AG04449 (cell line): ENCODE measurements at regions of chr5 and their contacts with region 1.

Region 1: GRCh38 chr5:141691867-141692532 is 10.0 kb upstream of the ARAP3 start:
- DNase-seq: no peak
- H3K4me3 ChIP-seq: peak overlapping the region; percentile 61
- CTCF ChIP-seq: peak; percentile 99

Region 2: DNA sequence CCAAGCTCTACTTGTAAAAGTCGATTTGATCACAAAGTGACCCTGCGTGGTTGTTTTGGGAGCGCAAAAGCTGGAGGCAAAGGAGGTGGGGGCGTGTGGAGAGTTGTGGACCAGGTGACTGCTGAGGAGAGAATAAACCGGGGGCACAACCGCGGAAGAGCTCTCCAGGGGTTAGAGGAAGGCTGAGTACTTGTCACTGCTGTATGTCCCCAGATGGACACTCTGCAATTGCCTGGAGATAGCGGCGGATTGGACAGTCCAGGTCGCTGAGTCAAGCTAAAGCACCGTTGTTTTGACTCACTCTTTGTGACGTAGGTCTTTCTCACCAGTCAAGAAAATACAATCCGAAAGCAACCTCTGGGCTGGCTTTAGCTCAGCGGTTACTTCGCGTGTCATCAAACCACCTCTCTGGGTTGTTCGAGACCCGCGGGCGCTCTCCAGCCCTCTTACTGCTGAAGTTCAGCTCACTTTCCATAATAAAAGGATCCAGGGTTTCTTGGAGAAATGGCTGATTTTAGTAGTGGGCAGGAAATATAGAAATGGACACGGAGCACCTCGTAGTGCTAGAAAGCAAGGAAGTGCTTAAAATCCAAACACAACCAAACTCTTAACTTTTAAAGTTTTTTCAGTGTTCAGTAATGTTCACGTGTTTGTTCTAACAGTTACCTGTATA is 966.1 kb before region 1 on chr5:
- CTCF ChIA-PET with region 1: no interaction called
- POLR2A ChIA-PET with region 1: no interaction called
- DNase-seq: peak; percentile 76
- H3K4me3 ChIP-seq: peak overlapping the region; percentile 63
- CTCF ChIP-seq: no peak

Region 3: GRCh38 chr5:141681695-141682641 is 10.0 kb before region 1 on chr5 and contains the start of gene ARAP3:
- CTCF ChIA-PET with region 1: interaction called, 74 read pairs
- POLR2A ChIA-PET with region 1: no interaction called
- DNase-seq: peak; percentile 37
- H3K4me3 ChIP-seq: peak within 1 kb of the TSS; percentile 58
- CTCF ChIP-seq: no peak

Region 4: DNA sequence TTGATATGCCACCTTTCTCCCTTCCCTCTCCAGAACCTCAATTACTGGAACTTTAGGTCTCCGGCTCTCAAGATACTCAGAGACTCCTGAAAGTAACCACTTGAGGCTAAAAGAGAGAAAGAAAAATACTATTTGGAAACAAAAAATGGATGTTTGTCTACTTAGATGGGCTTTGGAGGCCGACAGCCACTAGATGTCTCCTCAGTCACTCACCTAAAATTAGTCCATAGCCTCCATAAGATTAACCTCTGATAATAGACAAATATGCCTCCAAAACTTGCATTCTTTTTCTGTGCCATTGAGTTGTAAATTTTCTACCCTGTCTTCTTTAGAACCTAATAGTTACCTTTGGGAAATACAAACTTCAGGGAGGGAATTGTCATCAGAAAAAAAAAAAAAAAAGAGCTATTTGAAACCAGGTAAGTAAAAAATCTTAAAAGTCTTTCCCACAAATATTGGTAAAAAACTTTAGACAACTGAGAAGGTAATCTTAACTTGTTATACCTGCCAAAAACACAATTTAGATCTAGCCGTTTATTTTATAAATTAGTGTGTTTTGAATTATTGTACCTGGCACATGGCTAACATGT is 197.4 kb after region 1 on chr5:
- CTCF ChIA-PET with region 1: interaction called, 567 read pairs
- POLR2A ChIA-PET with region 1: no interaction called
- DNase-seq: no peak
- H3K4me3 ChIP-seq: no peak overlapping the region
- CTCF ChIP-seq: peak; percentile 26

Region 5: GRCh38 chr5:141923448-141924352 is 231.7 kb after region 1 on chr5 and contains the start of gene DELE1:
- CTCF ChIA-PET with region 1: interaction called, 20 read pairs
- POLR2A ChIA-PET with region 1: no interaction called
- DNase-seq: peak; percentile 70
- H3K4me3 ChIP-seq: peak within 1 kb of the TSS; percentile 85
- CTCF ChIP-seq: no peak

Region 6: GRCh38 chr5:141951332-141951781 is 259.4 kb after region 1 on chr5:
- CTCF ChIA-PET with region 1: interaction called, 828 read pairs
- POLR2A ChIA-PET with region 1: no interaction called
- DNase-seq: no peak
- H3K4me3 ChIP-seq: no peak overlapping the region
- CTCF ChIP-seq: peak; percentile 58

Region 7: DNA sequence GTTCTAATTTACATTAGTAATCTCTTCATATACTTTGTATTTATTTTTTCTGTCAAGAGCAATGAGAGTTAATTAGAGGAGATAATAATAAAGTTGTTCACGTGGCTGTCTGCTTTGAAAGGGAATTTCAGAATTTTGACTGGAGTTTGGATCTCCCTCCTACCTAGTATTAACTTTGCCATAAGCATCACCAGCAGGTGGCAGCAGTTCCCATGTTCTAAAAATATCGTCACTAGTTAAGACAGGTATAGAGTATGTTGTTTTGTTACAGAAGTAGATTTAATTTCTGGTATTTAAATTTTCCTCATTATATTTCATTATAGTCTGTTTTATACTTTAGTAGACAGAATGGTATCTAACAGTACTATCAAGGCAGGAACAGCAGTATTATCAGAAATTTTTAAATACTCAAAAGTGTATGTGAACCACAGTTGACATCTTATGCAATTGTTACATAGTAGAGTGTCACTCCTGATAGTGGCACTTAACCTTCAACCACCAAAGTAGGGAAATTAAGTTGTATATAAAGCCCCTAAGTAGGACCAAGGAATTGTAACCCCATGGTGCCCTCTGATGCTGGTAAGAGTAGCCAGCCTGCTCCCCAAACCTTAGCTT is 300.5 kb after region 1 on chr5:
- CTCF ChIA-PET with region 1: interaction called, 15 read pairs
- POLR2A ChIA-PET with region 1: no interaction called
- DNase-seq: no peak
- H3K4me3 ChIP-seq: no peak overlapping the region
- CTCF ChIP-seq: peak; percentile 67